Activated CD4-positive, alpha-beta T cell treated with anti-CD3 and anti-CD28 coated beads, Interleukin-2, amount 10 ng/mL, durations not matched to agents 24 days and 14 days (primary cell): ENCODE measurements at regions of chr9 and their contacts with region 1.

Region 1: GRCh38 chr9:109012876-109013678 is at the start of gene CTNNAL1:
- DNase-seq: peak; percentile 96
- H3K4me3 Mint-ChIP-seq: peak within 1 kb of the TSS; percentile 99
- H3K27ac Mint-ChIP-seq: peak within 1 kb of the TSS; percentile 97
- H3K4me1 Mint-ChIP-seq: peaks cover 24% of the 10 kb centered on the region
- H3K27me3 Mint-ChIP-seq: peaks cover 4% of the 10 kb centered on the region
- total RNA-seq, gene CTNNAL1: 17.8 and 18.8 TPM in 2 replicates

Region 2: DNA sequence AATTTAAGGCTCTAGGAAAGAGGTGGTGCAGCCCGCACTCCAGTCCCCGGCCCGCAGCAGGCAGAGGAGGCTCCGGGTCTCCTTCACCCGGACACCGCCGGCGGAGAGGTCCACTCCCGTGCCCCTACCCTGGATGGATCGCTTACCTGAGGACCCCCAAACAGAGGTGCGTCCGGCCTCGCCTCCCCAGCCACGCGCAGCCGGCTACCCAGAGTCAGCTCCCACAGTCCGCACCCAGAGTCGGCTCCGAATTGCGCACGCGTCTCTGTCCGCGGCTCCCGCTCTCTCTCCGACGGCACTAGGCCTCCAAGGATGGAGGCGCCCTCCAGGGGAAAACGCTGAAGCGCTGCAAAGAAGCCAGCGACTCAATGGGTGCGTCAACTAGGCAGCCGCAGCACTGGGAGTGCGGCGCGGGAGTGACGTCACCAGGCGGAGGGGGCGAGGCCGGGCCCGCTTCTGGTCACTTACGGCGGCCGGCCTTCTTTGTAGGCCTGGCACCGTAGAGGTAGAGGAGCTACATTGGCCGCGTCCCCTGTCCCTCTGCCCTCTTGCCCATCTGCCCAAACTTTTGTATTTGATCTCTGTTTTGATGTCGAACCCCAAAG is 79.3 kb before region 1 on chr9 and contains the start of gene ELP1:
- intact Hi-C with region 1: loop called (anchors 1 kb)
- DNase-seq: peak; percentile 98
- H3K4me3 Mint-ChIP-seq: peak within 1 kb of the TSS; percentile 97
- H3K27ac Mint-ChIP-seq: peak within 1 kb of the TSS; percentile 99
- H3K4me1 Mint-ChIP-seq: peaks cover 26% of the 10 kb centered on the region
- H3K27me3 Mint-ChIP-seq: no peaks in the 10 kb centered on the region
- total RNA-seq, gene ELP1: 35.2 and 36.2 TPM in 2 replicates

Region 3: DNA sequence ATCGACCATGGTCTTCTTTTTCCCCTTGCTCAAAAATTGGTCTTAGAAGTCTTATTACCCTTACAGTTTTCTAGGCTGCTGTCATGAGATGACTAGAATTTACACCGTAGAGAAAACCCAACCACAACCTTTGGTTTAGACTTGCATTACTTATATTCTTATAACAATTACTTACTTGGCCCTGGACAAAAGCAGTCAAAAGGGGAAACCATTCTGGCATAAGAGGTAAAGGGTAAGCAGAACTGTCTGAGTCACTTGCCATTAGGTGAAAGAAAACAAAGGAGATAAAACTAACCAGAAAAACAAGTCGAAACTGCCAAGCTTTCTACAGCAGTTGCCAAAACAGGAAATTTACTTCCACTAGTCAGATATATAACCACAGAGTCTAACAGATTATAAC is 88.7 kb after region 1 on chr9:
- intact Hi-C with region 1: loop called (anchors 1 kb)
- DNase-seq: peak; percentile 75
- H3K4me3 Mint-ChIP-seq: peak overlapping the region; percentile 69
- H3K27ac Mint-ChIP-seq: peak overlapping the region; percentile 89
- H3K4me1 Mint-ChIP-seq: peaks cover 53% of the 10 kb centered on the region
- H3K27me3 Mint-ChIP-seq: no peaks in the 10 kb centered on the region

Region 4: DNA sequence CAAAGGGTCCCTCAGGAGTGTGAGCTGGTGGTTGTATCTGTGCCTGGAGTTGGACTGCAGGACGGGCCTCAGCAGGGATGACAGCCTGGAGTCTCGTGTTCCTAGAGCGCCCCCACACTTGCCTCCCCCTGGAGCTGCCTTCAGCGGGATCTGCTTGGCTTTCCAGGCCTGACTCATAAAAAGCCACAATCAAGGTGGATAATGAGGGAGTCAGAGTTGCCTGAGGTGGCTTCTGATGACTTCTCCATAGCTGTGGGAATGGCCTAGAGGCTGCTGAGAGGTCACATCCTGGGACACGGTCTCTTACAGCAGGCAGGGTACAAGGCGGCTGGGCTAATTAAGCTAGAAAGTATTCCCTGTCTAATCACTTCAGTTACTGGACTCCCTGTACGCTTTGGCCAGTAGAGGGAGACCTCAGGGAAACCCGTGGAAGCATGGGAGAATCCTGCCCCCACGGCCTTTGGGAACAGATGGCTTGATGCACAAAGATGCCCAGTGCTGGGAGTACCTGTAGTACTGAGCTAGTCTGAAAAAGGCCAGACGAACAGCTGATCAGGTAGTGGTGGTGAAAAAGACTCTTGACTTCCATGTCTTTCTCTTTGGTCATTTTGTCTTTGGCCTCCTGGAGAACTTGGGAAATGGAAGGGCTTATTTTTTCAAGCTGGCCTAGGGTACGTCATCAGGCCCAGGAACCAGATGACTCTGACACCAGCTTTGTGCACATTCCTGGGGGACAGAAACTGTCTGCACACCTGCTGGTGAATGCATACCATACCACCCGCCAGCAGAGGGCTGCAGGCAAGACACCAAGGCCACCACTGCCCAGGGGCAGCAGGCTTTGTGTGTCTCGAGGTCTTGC is 170.1 kb after region 1 on chr9:
- intact Hi-C with region 1: loop called (anchors 1 kb)
- DNase-seq: peak; percentile 68
- H3K4me3 Mint-ChIP-seq: no peak overlapping the region
- H3K27ac Mint-ChIP-seq: no peak overlapping the region
- H3K4me1 Mint-ChIP-seq: peaks cover 13% of the 10 kb centered on the region
- H3K27me3 Mint-ChIP-seq: peaks cover 28% of the 10 kb centered on the region

Region 5: GRCh38 chr9:109463924-109464625 is 451.0 kb after region 1 on chr9:
- intact Hi-C with region 1: loop called (anchors 5 kb)
- DNase-seq: peak; percentile 77
- H3K4me3 Mint-ChIP-seq: no peak overlapping the region
- H3K27ac Mint-ChIP-seq: peak overlapping the region; percentile 88
- H3K4me1 Mint-ChIP-seq: peaks cover 45% of the 10 kb centered on the region
- H3K27me3 Mint-ChIP-seq: peaks cover 9% of the 10 kb centered on the region